ENCODE measurements at regions of chr3 and their contacts with region 1.

Region 1: DNA sequence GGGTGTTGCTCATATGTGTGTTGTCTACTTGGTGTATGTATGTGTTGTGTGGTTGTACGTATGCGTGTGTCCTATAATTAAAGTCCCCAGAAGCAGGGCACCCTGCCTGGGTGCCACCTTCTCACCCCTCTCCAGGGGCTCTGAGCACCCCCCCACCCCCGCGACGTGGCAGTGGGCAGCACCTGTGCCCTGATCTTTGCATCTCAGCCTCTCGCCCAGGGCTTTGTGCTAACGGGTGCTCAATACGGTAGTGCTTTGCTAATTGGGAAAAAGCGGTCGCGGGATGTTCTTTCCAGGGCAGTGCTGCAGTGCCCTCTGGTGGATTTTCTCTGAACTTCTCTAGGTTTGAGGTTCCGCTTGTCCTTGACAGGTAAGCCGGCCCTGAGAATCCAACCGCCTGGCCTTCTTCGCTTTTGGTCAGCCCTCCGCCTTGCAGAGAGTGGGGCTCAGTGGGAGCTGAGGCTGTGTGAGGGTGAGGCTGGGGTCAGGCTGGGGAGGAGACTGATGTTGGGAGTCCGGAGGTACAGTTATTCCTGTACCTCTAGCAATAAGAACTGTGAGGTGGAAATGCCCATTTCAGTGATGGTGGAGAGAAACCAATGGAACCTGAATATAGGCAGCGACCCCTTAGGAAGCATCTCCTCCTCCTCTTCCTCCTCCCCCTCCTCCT is 17.6 kb upstream of the EPHB3 start:
- DNase-seq: peak; percentile 68
- ATAC-seq: peak; percentile 72
- H3K4me3 ChIP-seq: no peak overlapping the region
- H3K27ac ChIP-seq: no peak overlapping the region
- H3K4me1 ChIP-seq: no peaks in the 10 kb centered on the region
- H3K27me3 ChIP-seq: peaks cover 0 to 17% of the 10 kb centered on the region in 2 experiments; a peak in 2 of 5 replicates
- CTCF ChIP-seq: peak; percentile 84
- EP300 ChIP-seq: no peak
- POLR2A ChIP-seq: no peak
- RAD21 ChIP-seq: peak; percentile 67

Region 2: DNA sequence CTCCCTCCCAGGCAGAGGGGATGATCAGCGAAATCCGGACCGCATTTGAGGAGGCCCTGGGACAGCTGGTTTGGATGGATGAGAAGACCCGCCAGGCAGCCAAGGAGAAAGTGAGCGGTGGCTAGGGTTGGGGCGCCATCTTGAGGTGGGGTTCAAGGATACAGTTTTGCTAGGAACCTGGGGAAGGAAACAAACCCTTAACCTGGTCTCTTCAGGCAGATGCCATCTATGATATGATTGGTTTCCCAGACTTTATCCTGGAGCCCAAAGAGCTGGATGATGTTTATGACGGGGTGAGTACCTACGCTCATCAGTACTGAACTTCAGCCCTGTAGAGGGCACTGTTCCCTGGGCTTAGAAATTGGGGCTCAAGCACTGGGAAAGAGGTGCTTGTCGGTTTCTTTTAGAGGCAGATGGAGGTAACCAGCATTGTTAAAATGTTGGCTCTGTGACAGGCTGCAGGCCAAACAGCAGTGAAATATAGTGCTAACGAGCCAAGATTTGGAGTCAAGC is 254.5 kb before region 1 on chr3:
- CTCF ChIA-PET with region 1: no interaction called
- POLR2A ChIA-PET with region 1: no interaction called
- in situ Hi-C with region 1: no loop called
- intact Hi-C with region 1: loop called (anchors 5 kb)
- DNase-seq: no peak
- ATAC-seq: peak; percentile 34
- H3K4me3 ChIP-seq: no peak overlapping the region
- H3K27ac ChIP-seq: no peak overlapping the region
- H3K4me1 ChIP-seq: peaks cover 44% of the 10 kb centered on the region
- H3K27me3 ChIP-seq: peaks cover 3 to 24% of the 10 kb centered on the region in 2 experiments; a peak in 3 of 5 replicates
- CTCF ChIP-seq: peak; percentile 89
- EP300 ChIP-seq: no peak
- POLR2A ChIP-seq: no peak
- RAD21 ChIP-seq: peak; percentile 74

Region 3: GRCh38 chr3:184354121-184354728 is 189.8 kb before region 1 on chr3:
- CTCF ChIA-PET with region 1: interaction called, 7 read pairs
- POLR2A ChIA-PET with region 1: no interaction called
- in situ Hi-C with region 1: loop called (anchors 5 kb)
- intact Hi-C with region 1: no loop called
- DNase-seq: peak; percentile 18
- ATAC-seq: peak; percentile 80
- H3K4me3 ChIP-seq: no peak overlapping the region
- H3K27ac ChIP-seq: no peak overlapping the region
- H3K4me1 ChIP-seq: peaks cover 23% of the 10 kb centered on the region
- H3K27me3 ChIP-seq: no peaks in the 10 kb centered on the region
- CTCF ChIP-seq: peak; percentile 85
- EP300 ChIP-seq: no peak
- POLR2A ChIP-seq: no peak
- RAD21 ChIP-seq: peak; percentile 64

Region 4: DNA sequence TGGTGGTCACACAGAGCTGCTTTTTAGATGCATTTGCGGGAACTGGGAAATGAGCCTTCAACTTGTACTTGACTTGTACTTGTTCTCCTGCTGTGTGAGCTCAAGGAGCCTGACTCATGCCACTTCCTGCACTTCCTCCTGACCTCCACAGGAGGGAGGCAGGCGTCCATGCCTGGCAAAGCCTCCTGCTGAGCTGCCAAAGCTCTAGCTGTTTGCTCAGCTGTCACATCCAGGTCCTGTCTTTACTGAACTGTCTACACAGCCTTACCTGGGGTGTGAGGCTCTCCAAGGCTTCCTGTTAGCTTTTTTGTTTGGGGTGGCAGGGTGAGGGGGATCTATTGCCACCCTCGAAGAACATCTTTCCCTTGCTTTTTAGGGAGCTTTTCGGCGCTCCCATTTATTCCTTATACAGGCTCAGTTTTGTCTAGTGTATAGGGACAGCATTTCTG is 172.4 kb before region 1 on chr3:
- CTCF ChIA-PET with region 1: interaction called, 12 read pairs
- POLR2A ChIA-PET with region 1: interaction called, 5 read pairs
- in situ Hi-C with region 1: no loop called
- intact Hi-C with region 1: loop called (anchors 1 kb)
- DNase-seq: peak; percentile 84
- ATAC-seq: peak; percentile 92
- H3K4me3 ChIP-seq: no peak overlapping the region
- H3K27ac ChIP-seq: peak overlapping the region; percentile 18
- H3K4me1 ChIP-seq: peaks cover 30% of the 10 kb centered on the region
- H3K27me3 ChIP-seq: no peaks in the 10 kb centered on the region
- CTCF ChIP-seq: peak; percentile 98
- EP300 ChIP-seq: peak in 1 of 2 experiments; percentile 23; a peak in 1 of 4 replicates
- POLR2A ChIP-seq: peak in 1 of 2 experiments; percentile 49; a peak in 1 of 4 replicates
- RAD21 ChIP-seq: peak; percentile 98

Region 5: DNA sequence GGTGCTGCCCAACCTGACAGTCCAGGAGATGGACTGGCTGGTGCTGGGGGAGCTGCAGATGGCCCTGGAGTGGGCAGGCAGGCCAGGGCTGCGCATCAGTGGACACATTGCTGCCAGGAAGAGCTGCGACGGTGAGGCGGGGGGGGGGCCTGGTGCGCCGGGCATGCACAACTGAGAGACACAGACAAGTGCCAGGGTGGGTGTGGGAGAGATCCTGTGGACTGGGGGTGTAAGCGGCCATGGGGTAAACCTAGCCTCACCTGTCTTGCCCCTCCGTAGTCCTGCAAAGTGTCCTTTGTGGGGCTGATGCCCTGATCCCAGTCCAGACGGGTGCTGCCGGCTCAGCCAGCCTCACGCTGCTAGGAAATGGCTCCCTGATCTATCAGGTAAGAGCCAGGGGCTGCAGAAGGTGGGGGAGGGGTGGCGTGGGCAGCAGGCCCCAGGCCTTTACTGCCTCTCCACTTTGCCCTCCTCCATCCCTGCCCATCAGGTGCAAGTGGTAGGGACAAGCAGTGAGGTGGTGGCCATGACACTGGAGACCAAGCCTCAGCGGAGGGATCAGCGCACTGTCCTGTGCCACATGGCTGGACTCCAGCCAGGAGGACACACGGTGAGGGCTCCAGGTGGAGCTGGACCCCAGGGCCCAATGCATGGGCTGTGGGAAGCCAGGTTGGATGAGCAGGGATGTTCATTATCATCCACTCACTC is 160.8 kb before region 1 on chr3:
- CTCF ChIA-PET with region 1: no interaction called
- POLR2A ChIA-PET with region 1: no interaction called
- in situ Hi-C with region 1: no loop called
- intact Hi-C with region 1: no loop called
- DNase-seq: no peak
- ATAC-seq: no peak
- H3K4me3 ChIP-seq: no peak overlapping the region
- H3K27ac ChIP-seq: no peak overlapping the region
- H3K4me1 ChIP-seq: peaks cover 12% of the 10 kb centered on the region; the same call in 1 of the 2 replicates
- H3K27me3 ChIP-seq: no peaks in the 10 kb centered on the region; a peak in 1 of 5 replicates
- CTCF ChIP-seq: no peak
- EP300 ChIP-seq: no peak
- POLR2A ChIP-seq: no peak
- RAD21 ChIP-seq: no peak

Region 6: GRCh38 chr3:184417619-184418327 is 126.2 kb before region 1 on chr3:
- CTCF ChIA-PET with region 1: interaction called, 3 read pairs
- POLR2A ChIA-PET with region 1: no interaction called
- in situ Hi-C with region 1: no loop called
- intact Hi-C with region 1: loop called (anchors 5 kb)
- DNase-seq: peak; percentile 56
- ATAC-seq: peak; percentile 71
- H3K4me3 ChIP-seq: peak overlapping the region in 1 of 3 experiments; percentile 52; a peak in 2 of 6 replicates
- H3K27ac ChIP-seq: peak overlapping the region; percentile 74
- H3K4me1 ChIP-seq: peaks cover 41% of the 10 kb centered on the region
- H3K27me3 ChIP-seq: no peaks in the 10 kb centered on the region
- CTCF ChIP-seq: peak; percentile 95
- EP300 ChIP-seq: no peak
- POLR2A ChIP-seq: no peak
- RAD21 ChIP-seq: peak; percentile 67

Region 7: DNA sequence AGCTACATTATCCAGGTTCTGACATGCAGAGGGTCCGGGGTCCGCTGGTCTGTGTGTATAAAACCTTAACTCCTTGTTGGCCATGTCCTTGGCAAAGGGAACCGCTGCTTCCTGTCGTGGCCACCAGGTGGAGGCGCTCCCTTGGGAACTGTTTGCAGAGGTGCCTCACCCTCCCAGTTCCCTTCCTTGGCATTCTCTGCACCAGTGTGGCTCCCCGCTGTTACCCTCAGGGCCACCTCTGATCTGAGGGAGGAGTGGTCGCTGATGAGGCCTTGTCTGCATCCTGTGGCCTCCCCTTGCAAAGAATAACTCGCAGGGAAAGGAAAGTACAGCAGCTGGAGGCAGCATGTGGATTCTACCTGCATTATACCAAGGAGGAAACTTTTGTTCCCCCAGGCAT is 74.6 kb before region 1 on chr3:
- CTCF ChIA-PET with region 1: interaction called, 3 read pairs
- POLR2A ChIA-PET with region 1: no interaction called
- in situ Hi-C with region 1: no loop called
- intact Hi-C with region 1: loop called (anchors 5 kb)
- DNase-seq: peak; percentile 25
- ATAC-seq: peak; percentile 68
- H3K4me3 ChIP-seq: no peak overlapping the region
- H3K27ac ChIP-seq: no peak overlapping the region
- H3K4me1 ChIP-seq: peaks cover 10% of the 10 kb centered on the region
- H3K27me3 ChIP-seq: peaks cover 1 to 34% of the 10 kb centered on the region in 2 experiments; a peak in 3 of 5 replicates
- CTCF ChIP-seq: peak; percentile 76
- EP300 ChIP-seq: no peak
- POLR2A ChIP-seq: no peak
- RAD21 ChIP-seq: no peak

Region 8: DNA sequence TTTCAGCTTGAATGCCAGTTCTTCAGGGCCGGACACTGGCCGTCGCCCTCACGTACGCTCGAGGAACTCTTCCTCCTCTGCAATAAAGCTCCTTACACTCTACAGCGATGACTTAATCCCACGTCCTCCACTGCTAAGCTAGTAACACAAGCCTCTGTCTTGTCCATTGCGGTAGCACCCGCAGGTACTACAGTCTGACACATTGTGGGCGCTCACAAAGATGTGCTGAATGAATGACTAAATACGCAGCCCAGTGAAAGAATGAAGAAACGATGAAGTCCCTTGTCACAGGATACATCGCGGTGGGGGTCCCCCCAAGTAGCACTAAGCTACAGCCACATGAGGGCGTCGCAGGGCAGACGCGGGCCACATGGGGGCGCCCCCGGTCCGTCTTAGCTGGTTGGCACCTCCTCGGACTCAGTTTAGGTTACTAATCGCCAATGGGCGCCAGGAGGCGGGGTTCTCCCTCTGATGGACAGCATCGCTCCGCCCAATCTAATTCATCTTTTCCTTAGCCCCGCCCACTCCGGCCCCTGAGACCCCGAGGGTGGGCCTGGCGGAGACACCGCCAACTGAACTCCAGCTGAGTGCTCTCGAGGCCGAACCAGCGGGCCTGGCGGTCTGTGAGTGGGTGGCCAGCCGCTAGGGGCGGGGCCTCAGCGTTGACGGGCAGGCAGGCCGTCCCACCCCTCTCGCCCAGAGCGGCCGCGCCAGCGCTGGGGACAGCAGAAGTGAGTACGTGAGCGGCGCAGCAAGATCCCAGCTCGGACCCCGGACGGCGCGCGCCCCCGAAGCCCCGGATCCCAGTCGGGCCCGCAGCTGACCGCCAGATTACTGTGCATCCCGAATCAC is 17.3 kb after region 1 on chr3 and contains the start of gene EPHB3:
- CTCF ChIA-PET with region 1: no interaction called
- POLR2A ChIA-PET with region 1: no interaction called
- in situ Hi-C with region 1: no loop called
- intact Hi-C with region 1: no loop called
- DNase-seq: peak; percentile 92
- ATAC-seq: peak; percentile 95
- H3K4me3 ChIP-seq: peak within 1 kb of the TSS; percentile 43 to 68 (median 50); a peak in 5 of 6 replicates
- H3K27ac ChIP-seq: no peak within 1 kb of the TSS
- H3K4me1 ChIP-seq: peaks cover 27% of the 10 kb centered on the region
- H3K27me3 ChIP-seq: peaks cover 12 to 84% of the 10 kb centered on the region in 2 experiments
- CTCF ChIP-seq: peak; percentile 97
- EP300 ChIP-seq: no peak; a peak in 1 of 4 replicates
- POLR2A ChIP-seq: no peak
- RAD21 ChIP-seq: peak; percentile 98
- total RNA-seq, gene EPHB3: not detected in 2 replicates

Region 9: GRCh38 chr3:184672977-184673870 is 129.2 kb after region 1 on chr3:
- CTCF ChIA-PET with region 1: no interaction called
- POLR2A ChIA-PET with region 1: no interaction called
- in situ Hi-C with region 1: no loop called
- intact Hi-C with region 1: no loop called
- DNase-seq: no peak
- ATAC-seq: no peak; the same call in 2 of the 3 replicates
- H3K4me3 ChIP-seq: no peak overlapping the region
- H3K27ac ChIP-seq: no peak overlapping the region
- H3K4me1 ChIP-seq: peaks cover 10% of the 10 kb centered on the region
- H3K27me3 ChIP-seq: peaks cover 4% of the 10 kb centered on the region in 2 experiments; a peak in 3 of 5 replicates
- CTCF ChIP-seq: no peak
- EP300 ChIP-seq: no peak
- POLR2A ChIP-seq: no peak
- RAD21 ChIP-seq: no peak

Measured in HepG2 (cell line).